ENCODE measurements at regions of chr3 and their contacts with region 1.

Region 1: DNA sequence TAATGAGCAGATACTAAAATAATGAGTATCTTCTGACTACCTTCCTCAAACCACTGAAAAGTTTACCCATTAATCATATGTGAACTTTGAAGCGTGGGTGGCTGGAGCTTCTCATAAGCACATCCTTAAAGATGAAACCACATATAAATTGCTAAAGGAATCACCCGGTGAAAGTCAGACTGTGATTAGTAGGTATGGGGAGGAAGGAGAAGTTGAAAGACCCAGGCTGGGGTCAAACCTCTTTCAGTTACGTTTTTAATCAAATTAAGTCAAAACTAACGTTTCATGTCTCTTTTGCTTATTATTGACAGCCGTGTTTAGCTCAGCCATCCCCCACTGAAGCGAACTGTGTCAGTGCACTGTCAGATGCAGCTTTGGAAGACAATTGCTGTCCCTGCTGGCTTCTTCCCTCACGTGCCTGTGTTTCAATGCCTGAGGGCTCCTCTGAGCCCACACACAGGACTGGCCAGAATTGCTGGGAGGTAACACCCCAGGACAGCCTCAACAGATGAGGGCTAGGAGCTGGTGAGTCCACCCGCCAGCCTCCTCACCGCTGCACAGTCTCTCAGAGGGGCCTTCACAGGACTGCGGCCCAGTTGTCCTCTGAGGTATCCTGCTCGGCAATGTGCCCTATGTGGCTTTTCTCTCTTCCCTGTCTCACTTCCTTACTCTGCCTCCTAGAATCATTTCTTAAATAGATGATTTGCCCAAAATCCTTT is 29.3 kb upstream of the SH3BP5 start:
- DNase-seq: peak; percentile 83
- H3K4me3 Mint-ChIP-seq: peak overlapping the region; percentile 52
- H3K27ac Mint-ChIP-seq: peak overlapping the region; percentile 60
- H3K4me1 Mint-ChIP-seq: peaks cover 39% of the 10 kb centered on the region
- H3K27me3 Mint-ChIP-seq: no peaks in the 10 kb centered on the region

Region 2: GRCh38 chr3:15098503-15099363 is 262.9 kb before region 1 on chr3 and contains the start of gene RBSN:
- intact Hi-C with region 1: loop called (anchors 2 kb)
- DNase-seq: peak; percentile 99
- H3K4me3 Mint-ChIP-seq: peak within 1 kb of the TSS; percentile 90
- H3K27ac Mint-ChIP-seq: peak within 1 kb of the TSS; percentile 93
- H3K4me1 Mint-ChIP-seq: peaks cover 29% of the 10 kb centered on the region
- H3K27me3 Mint-ChIP-seq: no peaks in the 10 kb centered on the region
- total RNA-seq, gene RBSN: 13.2 and 15.0 TPM in 2 replicates

Region 3: GRCh38 chr3:15291589-15292541 is 69.8 kb before region 1 on chr3:
- intact Hi-C with region 1: loop called (anchors 2 kb)
- DNase-seq: peak; percentile 92
- H3K4me3 Mint-ChIP-seq: peak overlapping the region; percentile 50
- H3K27ac Mint-ChIP-seq: peak overlapping the region; percentile 62
- H3K4me1 Mint-ChIP-seq: peaks cover 58% of the 10 kb centered on the region
- H3K27me3 Mint-ChIP-seq: no peaks in the 10 kb centered on the region

Region 4: GRCh38 chr3:15309662-15310335 is 51.9 kb before region 1 on chr3:
- intact Hi-C with region 1: loop called (anchors 1 kb)
- DNase-seq: no peak
- H3K4me3 Mint-ChIP-seq: peak overlapping the region; percentile 72
- H3K27ac Mint-ChIP-seq: peak overlapping the region; percentile 94
- H3K4me1 Mint-ChIP-seq: peaks cover 54% of the 10 kb centered on the region
- H3K27me3 Mint-ChIP-seq: no peaks in the 10 kb centered on the region

Region 5: DNA sequence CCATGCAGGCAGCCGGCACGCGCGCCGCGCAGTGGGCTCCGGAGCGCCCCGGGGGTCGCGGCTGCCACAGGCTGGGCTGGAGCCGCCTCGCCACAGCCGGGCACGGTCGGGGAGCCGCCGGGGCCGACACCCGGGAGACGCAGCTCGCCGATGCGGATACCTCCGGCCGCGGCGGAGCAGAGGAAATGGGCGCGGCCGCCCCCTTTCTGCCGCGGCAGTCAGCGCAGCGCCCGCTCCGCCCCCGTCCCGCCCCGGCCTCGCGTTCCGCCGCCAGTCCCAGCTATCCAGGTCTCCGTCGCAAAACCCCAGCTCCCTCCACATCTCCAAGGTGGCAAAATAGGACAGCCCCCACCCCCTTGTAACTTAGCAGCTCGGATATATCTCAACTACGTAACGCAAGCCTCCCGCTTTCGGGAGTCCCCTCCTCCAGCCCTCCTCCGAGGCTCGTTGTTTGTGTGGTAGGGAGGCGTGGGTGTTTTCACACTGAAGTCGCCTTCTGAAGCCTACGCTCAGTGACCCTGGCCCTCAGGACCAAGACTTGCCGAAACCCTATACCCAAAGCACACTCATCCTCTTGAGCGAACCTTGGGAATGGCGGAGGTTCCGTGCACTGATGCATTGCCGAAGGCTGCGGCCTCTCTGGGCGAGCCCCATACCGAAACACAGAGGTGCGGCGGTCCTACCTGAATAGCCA is 29.1 kb before region 1 on chr3 and contains the start of gene SH3BP5:
- intact Hi-C with region 1: loop called (anchors 1 kb)
- DNase-seq: peak; percentile 94
- H3K4me3 Mint-ChIP-seq: peak within 1 kb of the TSS; percentile 92
- H3K27ac Mint-ChIP-seq: peak within 1 kb of the TSS; percentile 89
- H3K4me1 Mint-ChIP-seq: peaks cover 48% of the 10 kb centered on the region
- H3K27me3 Mint-ChIP-seq: peaks cover 2% of the 10 kb centered on the region
- total RNA-seq, gene SH3BP5: 19.5 and 19.8 TPM in 2 replicates

Region 6: DNA sequence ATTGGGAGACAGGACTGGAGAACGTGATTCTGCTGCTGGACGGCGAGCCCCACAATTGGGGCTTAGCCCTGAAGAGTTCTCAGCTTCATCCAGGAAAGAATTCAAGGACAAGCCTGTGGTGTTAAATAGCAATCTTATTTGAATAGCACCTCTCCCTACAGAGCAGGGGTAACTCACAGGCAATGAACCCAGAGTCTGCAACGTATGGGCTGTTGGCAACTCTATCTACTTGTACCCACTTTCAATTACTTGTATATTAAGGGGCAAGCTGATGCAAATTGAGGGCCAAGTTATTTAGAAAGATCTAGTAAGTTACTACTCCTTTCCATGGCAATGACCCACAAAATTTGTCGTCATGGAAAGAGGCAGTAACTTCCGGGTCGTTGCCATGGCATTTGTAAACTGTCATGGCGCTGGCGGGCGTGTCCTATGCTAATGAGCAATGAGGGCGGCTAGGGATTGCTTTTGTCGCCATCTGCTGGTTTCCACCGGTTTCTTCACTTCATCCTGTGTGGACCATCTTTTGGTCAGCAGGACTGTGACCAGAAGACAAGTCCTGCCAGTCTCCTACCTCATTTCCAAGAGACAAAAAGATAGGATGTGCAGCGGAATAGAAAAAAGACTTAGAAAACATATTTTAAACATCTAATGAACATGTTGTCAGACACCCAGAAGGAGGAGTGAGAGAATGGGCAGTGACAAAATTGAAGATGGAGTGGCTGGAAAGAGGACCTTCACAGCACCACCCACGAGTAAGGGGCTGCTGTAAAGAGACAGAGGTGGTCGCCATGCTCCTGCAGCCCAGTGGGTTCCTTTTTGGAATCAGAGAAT is 16.5 kb after region 1 on chr3:
- intact Hi-C with region 1: loop called (anchors 1 kb)
- DNase-seq: peak; percentile 99
- H3K4me3 Mint-ChIP-seq: no peak overlapping the region
- H3K27ac Mint-ChIP-seq: peak overlapping the region; percentile 86
- H3K4me1 Mint-ChIP-seq: peaks cover 14% of the 10 kb centered on the region
- H3K27me3 Mint-ChIP-seq: peaks cover 3% of the 10 kb centered on the region

Region 7: DNA sequence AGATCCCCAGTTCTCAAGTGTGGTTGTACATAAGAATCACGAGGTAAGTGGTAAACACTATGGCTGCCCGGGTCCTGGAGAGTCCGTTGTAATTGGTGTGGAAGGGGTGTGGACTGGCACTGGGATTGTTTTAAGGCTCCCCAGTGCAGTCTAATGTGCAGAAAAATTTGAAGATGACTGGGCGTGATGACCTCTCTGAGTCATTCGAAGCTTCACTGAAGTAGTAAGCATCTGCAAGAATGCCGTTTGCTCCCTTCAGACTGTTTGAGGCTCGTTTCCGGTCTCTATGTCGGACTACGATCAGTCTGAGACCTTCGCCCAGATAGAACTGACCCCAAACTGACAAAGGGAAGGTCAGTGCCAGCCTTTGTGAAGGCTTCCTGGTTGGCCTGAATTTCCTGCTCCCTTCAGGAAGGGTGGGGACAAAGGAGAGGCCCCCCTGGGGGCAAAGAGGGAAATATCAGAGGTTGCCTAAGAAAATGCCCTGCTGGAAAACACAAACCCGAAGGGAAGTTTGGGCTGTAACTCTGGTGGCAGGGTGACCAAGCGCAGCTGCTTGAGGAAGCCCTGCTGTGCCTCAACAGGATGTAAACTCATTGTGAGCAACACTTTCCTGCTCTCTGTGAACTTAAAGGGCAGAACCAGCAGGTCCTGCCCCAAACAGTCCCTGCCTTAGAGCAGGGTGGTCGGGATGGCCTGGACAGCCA is 274.5 kb after region 1 on chr3:
- intact Hi-C with region 1: loop called (anchors 5 kb)
- DNase-seq: peak; percentile 78
- H3K4me3 Mint-ChIP-seq: peak overlapping the region; percentile 68
- H3K27ac Mint-ChIP-seq: peak overlapping the region; percentile 94
- H3K4me1 Mint-ChIP-seq: peaks cover 40% of the 10 kb centered on the region
- H3K27me3 Mint-ChIP-seq: no peaks in the 10 kb centered on the region

Measured in activated CD4-positive, alpha-beta T cell treated with anti-CD3 and anti-CD28 coated beads, Interleukin-2, amount 10 ng/mL, durations not matched to agents 24 days and 14 days (primary cell).